ENCODE measurements at regions of chr9 and their contacts with region 1.

Region 1: DNA sequence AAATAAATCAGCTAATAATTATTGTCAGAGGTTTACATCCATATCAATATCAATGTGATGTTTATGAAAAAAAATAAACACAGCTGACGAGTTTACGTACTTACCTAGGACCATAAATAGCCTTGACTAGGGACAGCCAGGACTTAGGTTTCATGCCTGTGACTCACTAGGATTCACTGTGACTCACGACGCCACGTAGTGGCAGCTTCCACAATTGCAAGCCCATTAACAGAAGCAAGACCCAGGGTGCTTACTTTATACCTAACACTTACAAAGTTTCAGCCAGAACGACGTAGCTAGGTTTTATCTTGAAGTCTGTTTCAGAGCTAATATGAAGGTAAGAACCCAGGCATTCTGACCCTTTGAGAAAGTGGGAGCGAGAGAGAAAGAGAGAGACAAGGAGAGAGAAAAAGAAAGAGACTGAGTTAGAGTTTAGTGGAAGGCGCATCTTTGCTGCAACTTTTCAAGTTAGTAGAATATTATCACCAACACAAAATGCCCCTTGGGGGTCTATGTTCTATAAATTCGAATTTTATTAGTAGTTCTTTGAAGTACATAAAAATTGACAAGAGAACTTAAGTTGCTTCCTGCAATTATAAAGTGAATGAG is 191.2 kb downstream of the GNA14 start:
- ATAC-seq: peak; percentile 42 to 88 (median 66)
- H3K4me3 ChIP-seq: no peak overlapping the region
- H3K27ac ChIP-seq: no peak overlapping the region
- H3K4me1 ChIP-seq: no peaks in the 10 kb centered on the region

Region 2: DNA sequence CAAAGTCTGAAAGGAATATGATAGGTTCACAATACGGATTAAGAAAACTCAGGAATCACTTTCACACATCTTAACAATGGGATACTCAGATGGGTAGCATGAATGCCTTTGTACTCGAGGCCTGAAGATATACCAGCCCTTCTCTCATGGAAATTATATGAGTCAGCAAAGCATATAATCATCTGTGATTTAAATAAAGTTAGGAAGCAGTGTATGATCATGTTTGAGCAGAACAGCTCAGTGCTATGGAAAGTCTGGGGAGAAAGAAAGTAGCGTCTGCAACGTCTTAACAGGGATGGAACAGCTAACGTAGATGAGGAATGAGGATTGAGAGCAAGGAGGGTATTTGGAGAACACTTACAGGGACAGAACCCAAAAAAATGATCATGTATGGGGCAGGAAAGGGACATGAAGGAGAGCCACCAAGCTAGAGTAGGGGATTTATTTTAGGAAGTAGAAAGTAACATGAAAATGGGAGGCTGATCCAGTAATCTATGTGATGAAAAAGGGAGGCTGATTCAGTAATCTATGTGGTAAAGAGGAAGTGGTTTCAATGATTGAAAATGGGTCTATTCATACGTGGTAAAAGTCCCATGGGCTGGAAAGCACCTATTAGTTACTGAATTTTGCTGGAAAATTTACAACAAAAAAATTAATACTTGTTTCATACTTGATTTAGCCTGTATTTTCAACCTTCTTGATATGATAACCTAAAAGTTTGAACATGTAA is 105.3 kb after region 1 on chr9:
- in situ Hi-C with region 1: no loop called
- ATAC-seq: peak in 3 of 8 experiments; percentile 43 to 50 (median 43)
- H3K4me3 ChIP-seq: no peak overlapping the region
- H3K27ac ChIP-seq: no peak overlapping the region
- H3K4me1 ChIP-seq: peaks cover 13 to 14% of the 10 kb centered on the region in 2 donors

Region 3: DNA sequence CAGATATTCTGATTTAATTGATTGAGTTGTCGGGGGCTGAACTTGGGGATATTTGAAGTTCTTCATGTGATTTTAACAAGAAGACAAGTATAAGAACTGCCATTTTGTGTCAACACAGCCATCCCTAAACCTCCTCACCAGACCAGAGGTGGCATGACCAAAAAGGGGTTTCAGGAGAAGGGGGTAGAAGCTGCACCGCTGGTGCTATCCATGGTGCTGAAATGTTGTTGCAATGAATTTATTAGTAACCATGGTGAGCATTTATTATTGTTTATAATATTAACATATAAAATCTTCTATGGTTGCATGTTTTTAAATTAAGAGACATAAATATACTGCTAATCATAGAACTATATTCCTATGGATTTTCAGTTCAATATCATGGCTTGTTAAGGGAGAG is 118.9 kb after region 1 on chr9:
- in situ Hi-C with region 1: no loop called
- ATAC-seq: peak in 1 of 8 experiments; percentile 35
- H3K4me3 ChIP-seq: no peak overlapping the region
- H3K27ac ChIP-seq: no peak overlapping the region
- H3K4me1 ChIP-seq: no peaks in the 10 kb centered on the region

Region 4: GRCh38 chr9:77731930-77732329 is 275.0 kb after region 1 on chr9:
- in situ Hi-C with region 1: loop called in 2 of 9 experiments (anchors 25 kb)
- ATAC-seq: peak in 2 of 8 experiments; percentile 58 to 87
- H3K4me3 ChIP-seq: no peak overlapping the region
- H3K27ac ChIP-seq: no peak overlapping the region
- H3K4me1 ChIP-seq: peaks cover 0 to 3% of the 10 kb centered on the region in 2 donors